ENCODE measurements at regions of chr10 and their contacts with region 1.

Region 1: GRCh38 chr10:97701438-97702069 is 12.0 kb upstream of the MARVELD1 start:
- DNase-seq: peak in 6 of 9 experiments; percentile 37 to 77 (median 56)
- ATAC-seq: peak; percentile 99
- H3K4me3 ChIP-seq: no peak overlapping the region
- H3K4me3 Mint-ChIP-seq: no peak overlapping the region
- H3K27ac ChIP-seq: no peak overlapping the region
- H3K27ac Mint-ChIP-seq: no peak overlapping the region
- H3K4me1 ChIP-seq: no peaks in the 10 kb centered on the region
- H3K4me1 Mint-ChIP-seq: no peaks in the 10 kb centered on the region
- H3K27me3 ChIP-seq: no peaks in the 10 kb centered on the region
- H3K27me3 Mint-ChIP-seq: peaks cover 11% of the 10 kb centered on the region
- CTCF ChIP-seq: peak; percentile 69

Region 2: DNA sequence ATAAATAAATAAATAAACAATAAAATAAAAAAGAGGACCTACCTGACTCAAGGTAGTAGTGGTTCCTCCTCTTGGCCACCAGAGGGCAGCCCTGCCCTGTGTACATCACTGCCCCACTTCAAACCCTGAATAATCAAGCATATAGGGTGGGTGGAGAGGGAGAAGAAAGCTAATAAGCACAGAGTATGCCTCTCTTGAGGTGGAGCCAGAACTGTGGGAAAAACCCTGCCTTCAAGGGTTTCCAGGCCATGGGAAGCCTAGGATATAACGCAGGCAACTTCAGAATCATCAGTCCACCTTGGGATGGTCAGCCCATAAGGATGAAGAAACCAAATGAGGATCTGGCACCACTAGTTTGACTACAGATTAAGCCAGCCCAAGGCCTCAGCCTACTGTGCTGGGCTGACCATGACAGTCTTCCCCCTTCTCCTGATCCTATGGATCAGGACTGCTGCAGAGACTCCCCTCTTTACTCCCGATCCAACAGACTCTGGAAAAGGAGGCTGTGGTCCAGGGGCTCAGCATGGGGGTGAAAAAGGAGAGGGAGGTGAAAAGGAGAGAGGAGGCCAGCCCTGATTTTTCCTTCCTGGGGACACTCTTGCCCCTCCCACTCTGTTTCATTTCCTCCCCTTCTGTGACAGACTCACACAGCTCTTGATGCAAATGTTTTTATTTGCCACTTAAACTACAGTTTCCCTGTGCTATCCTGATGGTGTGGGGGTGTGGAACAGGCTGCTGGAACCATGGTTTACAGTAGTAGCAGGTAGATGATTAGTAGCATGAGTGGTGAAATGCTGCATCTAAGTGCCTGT is 24.6 kb before region 1 on chr10:
- CTCF ChIA-PET with region 1: interaction called, 48 read pairs
- POLR2A ChIA-PET with region 1: no interaction called
- intact Hi-C with region 1: loop called (anchors 2 kb)
- DNase-seq: peak in 8 of 9 experiments; percentile 27 to 79 (median 56)
- ATAC-seq: peak; percentile 97
- H3K4me3 ChIP-seq: no peak overlapping the region
- H3K4me3 Mint-ChIP-seq: no peak overlapping the region
- H3K27ac ChIP-seq: no peak overlapping the region
- H3K27ac Mint-ChIP-seq: no peak overlapping the region
- H3K4me1 ChIP-seq: no peaks in the 10 kb centered on the region
- H3K4me1 Mint-ChIP-seq: no peaks in the 10 kb centered on the region
- H3K27me3 ChIP-seq: no peaks in the 10 kb centered on the region
- H3K27me3 Mint-ChIP-seq: no peaks in the 10 kb centered on the region
- CTCF ChIP-seq: peak; percentile 91

Region 3: DNA sequence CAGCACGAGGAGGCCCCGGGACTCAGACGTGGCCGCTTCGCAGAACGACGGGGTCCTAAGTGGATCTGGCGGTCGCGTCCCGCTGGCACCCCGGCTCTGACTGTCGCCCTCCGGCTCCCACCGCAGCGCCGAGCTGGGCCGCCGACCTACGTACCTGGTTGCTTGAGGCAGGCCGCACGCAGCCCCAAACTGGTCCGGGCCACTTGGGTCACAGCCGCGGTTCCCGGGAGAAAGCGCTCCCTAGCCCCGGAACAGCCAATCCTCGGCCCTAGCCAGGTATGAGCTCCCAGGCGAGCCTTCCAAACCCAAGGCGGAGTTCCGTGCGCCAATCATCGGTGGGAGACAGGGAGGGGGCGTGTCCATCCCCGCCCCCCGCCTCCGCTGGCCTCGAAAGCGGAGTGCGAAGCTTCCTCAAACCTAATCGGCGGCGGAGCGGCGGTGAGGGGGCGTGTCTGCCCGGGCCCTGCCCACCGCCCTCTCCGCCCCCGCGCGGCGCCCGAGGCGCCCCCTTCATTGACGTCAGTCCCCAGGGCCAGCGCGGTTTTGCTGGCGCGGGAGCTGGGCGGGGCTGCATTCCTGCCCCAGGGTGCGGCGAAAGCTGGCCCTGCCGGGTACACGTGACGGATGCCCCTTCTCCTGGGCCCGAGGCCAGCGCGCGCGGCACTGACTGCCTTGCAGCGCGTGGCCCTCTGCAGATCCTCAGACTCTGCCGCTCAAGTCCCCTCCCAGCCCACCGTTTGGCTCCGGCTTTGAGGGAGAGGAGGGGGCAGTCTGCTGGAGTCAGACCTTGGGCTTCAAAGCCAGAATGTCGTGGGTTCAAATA is 14.4 kb before region 1 on chr10 and contains the start of gene AVPI1:
- CTCF ChIA-PET with region 1: interaction called, 48 read pairs
- POLR2A ChIA-PET with region 1: interaction called, 4 read pairs
- intact Hi-C with region 1: no loop called
- DNase-seq: peak; percentile 90 to 98 (median 96)
- ATAC-seq: peak; percentile 94
- H3K4me3 ChIP-seq: peak within 1 kb of the TSS; percentile 77 to 82
- H3K4me3 Mint-ChIP-seq: peak within 1 kb of the TSS; percentile 89
- H3K27ac ChIP-seq: peak within 1 kb of the TSS; percentile 47 to 64
- H3K27ac Mint-ChIP-seq: peak within 1 kb of the TSS; percentile 86
- H3K4me1 ChIP-seq: peaks cover 22% of the 10 kb centered on the region
- H3K4me1 Mint-ChIP-seq: peaks cover 23% of the 10 kb centered on the region
- H3K27me3 ChIP-seq: no peaks in the 10 kb centered on the region
- H3K27me3 Mint-ChIP-seq: peaks cover 4% of the 10 kb centered on the region
- CTCF ChIP-seq: no peak
- total RNA-seq, gene AVPI1: 13.7 TPM

Region 4: DNA sequence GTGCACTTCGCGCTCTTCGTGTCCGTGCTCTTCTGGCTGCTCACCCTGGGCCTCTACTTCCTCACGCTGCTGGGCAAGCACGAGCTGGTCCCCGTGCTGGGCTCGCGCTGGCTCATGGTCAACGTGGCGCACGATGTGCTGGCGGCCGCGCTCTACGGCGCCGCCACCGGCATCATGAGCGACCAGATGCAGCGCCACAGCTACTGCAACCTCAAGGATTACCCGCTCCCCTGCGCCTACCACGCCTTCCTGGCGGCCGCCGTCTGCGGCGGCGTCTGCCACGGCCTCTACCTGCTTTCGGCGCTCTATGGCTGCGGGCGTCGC is 12.5 kb after region 1 on chr10:
- CTCF ChIA-PET with region 1: interaction called, 18 read pairs
- POLR2A ChIA-PET with region 1: interaction called, 7 read pairs
- intact Hi-C with region 1: no loop called
- DNase-seq: peak in 8 of 9 experiments; percentile 19 to 82 (median 59)
- ATAC-seq: peak; percentile 83
- H3K4me3 ChIP-seq: peak overlapping the region; percentile 57 to 63
- H3K4me3 Mint-ChIP-seq: peak overlapping the region; percentile 99
- H3K27ac ChIP-seq: no peak overlapping the region
- H3K27ac Mint-ChIP-seq: peak overlapping the region; percentile 82
- H3K4me1 ChIP-seq: peaks cover 9% of the 10 kb centered on the region
- H3K4me1 Mint-ChIP-seq: peaks cover 15% of the 10 kb centered on the region
- H3K27me3 ChIP-seq: peaks cover 0 to 3% of the 10 kb centered on the region in 2 experiments
- H3K27me3 Mint-ChIP-seq: peaks cover 17% of the 10 kb centered on the region
- CTCF ChIP-seq: no peak

Region 5: GRCh38 chr10:97810446-97810845 is 108.9 kb after region 1 on chr10:
- CTCF ChIA-PET with region 1: no interaction called
- POLR2A ChIA-PET with region 1: no interaction called
- intact Hi-C with region 1: no loop called
- DNase-seq: no peak
- ATAC-seq: no peak
- H3K4me3 ChIP-seq: no peak overlapping the region
- H3K4me3 Mint-ChIP-seq: no peak overlapping the region
- H3K27ac ChIP-seq: no peak overlapping the region
- H3K27ac Mint-ChIP-seq: no peak overlapping the region
- H3K4me1 ChIP-seq: no peaks in the 10 kb centered on the region
- H3K4me1 Mint-ChIP-seq: peaks cover 15% of the 10 kb centered on the region
- H3K27me3 ChIP-seq: no peaks in the 10 kb centered on the region
- H3K27me3 Mint-ChIP-seq: no peaks in the 10 kb centered on the region
- CTCF ChIP-seq: no peak

Region 6: GRCh38 chr10:98028168-98028770 is 326.7 kb after region 1 on chr10:
- CTCF ChIA-PET with region 1: interaction called, 5 read pairs
- POLR2A ChIA-PET with region 1: no interaction called
- intact Hi-C with region 1: loop called (anchors 5 kb)
- DNase-seq: peak; percentile 25 to 74 (median 62)
- ATAC-seq: peak; percentile 66
- H3K4me3 ChIP-seq: no peak overlapping the region
- H3K4me3 Mint-ChIP-seq: no peak overlapping the region
- H3K27ac ChIP-seq: no peak overlapping the region
- H3K27ac Mint-ChIP-seq: no peak overlapping the region
- H3K4me1 ChIP-seq: peaks cover 4% of the 10 kb centered on the region
- H3K4me1 Mint-ChIP-seq: peaks cover 7% of the 10 kb centered on the region
- H3K27me3 ChIP-seq: peaks cover 5 to 23% of the 10 kb centered on the region in 2 experiments
- H3K27me3 Mint-ChIP-seq: peaks cover 53% of the 10 kb centered on the region
- CTCF ChIP-seq: peak; percentile 60

Region 7: GRCh38 chr10:98045785-98046389 is 344.3 kb after region 1 on chr10:
- CTCF ChIA-PET with region 1: interaction called, 8 read pairs
- POLR2A ChIA-PET with region 1: no interaction called
- intact Hi-C with region 1: loop called (anchors 2 to 5 kb)
- DNase-seq: peak; percentile 21 to 76 (median 54)
- ATAC-seq: peak; percentile 72
- H3K4me3 ChIP-seq: no peak overlapping the region
- H3K4me3 Mint-ChIP-seq: no peak overlapping the region
- H3K27ac ChIP-seq: no peak overlapping the region
- H3K27ac Mint-ChIP-seq: no peak overlapping the region
- H3K4me1 ChIP-seq: peaks cover 6% of the 10 kb centered on the region
- H3K4me1 Mint-ChIP-seq: peaks cover 4% of the 10 kb centered on the region
- H3K27me3 ChIP-seq: peaks cover 3% of the 10 kb centered on the region in 2 experiments
- H3K27me3 Mint-ChIP-seq: peaks cover 30% of the 10 kb centered on the region
- CTCF ChIP-seq: peak; percentile 93

Measured in CD8-positive, alpha-beta T cell (primary cell).